ENCODE measurements at regions of chr11 and their contacts with region 1.

Region 1: GRCh38 chr11:6825231-6825744 is 20.2 kb upstream of the OR10A5 start:
- ATAC-seq: peak in 5 of 8 experiments; percentile 92 to 98 (median 96)
- H3K4me3 ChIP-seq: no peak overlapping the region
- H3K27ac ChIP-seq: peak overlapping the region in 1 of 2 donors; percentile 51
- H3K4me1 ChIP-seq: no peaks in the 10 kb centered on the region

Region 2: DNA sequence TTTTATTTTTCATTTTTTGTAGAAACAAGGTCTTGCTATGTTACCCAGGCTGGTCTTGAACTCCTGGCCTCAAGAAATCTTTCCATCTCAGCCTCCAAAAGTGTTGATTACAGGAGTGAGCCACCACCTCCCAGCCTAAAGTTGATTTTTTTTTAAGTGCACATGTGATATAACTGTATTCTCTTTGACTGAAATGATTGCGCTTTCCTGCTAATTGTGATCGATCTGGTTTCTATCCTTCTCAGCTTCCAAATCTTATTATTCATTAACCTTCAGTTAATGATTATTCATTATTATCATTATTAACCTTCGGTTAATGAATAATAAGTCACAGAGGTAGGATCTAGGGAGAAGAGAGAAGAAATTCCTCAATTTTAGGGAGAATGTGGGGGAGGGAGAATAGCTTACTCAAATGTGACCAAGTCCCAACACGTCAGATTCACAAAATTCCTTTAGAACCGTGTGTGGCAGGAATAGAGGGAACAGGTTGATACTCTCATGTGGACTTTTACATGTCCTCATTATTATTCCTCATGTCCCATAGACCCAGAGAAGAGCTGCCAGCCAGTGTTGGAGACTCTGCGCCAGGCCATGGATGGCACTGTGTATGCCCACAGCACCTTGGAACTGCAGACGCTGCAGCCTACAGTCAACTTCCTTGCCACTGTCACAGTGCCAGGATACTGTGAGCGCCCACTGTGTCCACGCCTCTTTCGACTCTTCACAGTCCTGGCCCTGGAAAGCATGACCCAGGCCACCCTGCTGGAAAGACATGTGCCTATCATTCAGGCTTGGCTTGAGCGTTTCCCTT is 268.9 kb before region 1 on chr11:
- in situ Hi-C with region 1: no loop called
- ATAC-seq: no peak
- H3K4me3 ChIP-seq: no peak overlapping the region
- H3K27ac ChIP-seq: no peak overlapping the region
- H3K4me1 ChIP-seq: no peaks in the 10 kb centered on the region

Region 3: DNA sequence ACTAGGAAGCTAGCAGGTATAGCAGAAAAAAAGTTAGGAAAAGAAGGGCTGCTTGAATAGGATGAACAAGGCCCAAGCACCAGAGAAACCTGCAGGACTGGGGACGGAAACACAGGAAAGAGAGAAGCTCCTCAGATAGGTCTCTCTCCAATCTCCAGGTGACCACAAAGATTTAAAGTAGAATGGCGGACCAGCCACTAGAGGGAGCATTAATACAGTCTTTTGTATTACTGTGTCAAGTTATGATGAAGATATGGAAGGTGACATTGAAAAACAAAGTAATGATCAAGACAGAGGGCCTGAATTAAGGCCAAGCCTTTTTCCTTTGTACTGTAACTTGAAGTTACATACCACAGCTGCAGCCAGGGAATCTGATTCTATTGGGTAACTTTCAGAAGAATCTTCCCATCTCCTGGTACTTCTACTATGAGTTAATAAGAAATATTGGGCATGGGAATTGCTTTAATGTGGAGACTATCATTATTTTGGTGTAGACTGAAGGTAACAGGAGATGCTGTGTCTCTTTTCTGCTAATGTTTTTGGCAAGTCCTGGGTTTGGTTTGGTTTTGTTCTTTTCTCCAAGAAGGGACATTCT is 87.3 kb before region 1 on chr11:
- in situ Hi-C with region 1: loop called in 1 of 9 experiments (anchors 25 kb)
- ATAC-seq: peak in 3 of 8 experiments; percentile 72 to 78 (median 76)
- H3K4me3 ChIP-seq: no peak overlapping the region
- H3K27ac ChIP-seq: no peak overlapping the region
- H3K4me1 ChIP-seq: no peaks in the 10 kb centered on the region